ENCODE measurements at regions of chr18 and their contacts with region 1.

Region 1: GRCh38 chr18:51077217-51077616 is 47.2 kb downstream of the SMAD4 start:
- DNase-seq: no peak
- H3K4me3 ChIP-seq: no peak overlapping the region
- H3K27ac ChIP-seq: no peak overlapping the region
- H3K4me1 ChIP-seq: peaks cover 0 to 19% (median 11%) of the 10 kb centered on the region in 4 donors
- H3K27me3 ChIP-seq: no peaks in the 10 kb centered on the region
- CTCF ChIP-seq: no peak
- EP300 ChIP-seq: no peak
- POLR2A ChIP-seq: no peak

Region 2: DNA sequence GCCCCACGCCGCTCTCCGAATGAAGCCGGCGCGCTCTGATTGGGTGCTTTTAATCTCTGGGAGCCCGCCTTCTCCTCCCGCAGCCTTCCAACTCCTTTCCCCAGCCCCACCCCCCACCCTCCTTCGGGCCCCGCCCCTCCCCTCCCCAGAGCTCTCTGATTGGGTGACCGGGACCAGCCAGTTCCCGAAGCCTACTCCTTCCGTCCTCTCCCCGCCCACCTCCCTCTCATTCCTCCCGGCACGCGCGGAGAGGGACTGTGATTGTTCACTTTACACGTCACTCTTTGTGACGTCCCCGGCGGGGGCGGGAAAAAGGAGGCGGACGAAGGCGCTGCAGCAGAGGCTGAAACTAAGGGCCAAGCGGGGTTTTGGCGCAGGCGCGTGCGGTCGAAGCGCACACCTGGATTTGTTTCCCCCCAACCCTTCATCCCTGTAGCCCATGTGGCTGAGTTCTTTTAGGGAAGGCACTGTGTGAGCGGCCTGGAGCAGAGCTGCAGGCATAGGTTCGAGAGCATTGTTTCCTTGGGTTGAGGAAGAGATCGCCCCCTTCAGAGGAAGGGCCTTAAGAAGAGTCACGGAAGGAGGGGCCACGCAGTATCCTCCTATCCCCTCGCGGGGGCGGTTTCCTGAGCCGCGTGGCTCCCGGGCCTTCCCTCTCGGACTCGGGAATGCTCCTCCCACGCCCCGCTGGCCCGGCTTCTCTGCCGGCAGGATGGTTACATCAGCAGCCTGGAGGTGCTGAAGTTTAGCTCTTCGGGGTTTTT is 120.6 kb after region 1 on chr18 and contains the start of gene MEX3C:
- intact Hi-C with region 1: loop called (anchors 10 kb)
- DNase-seq: peak; percentile 100
- H3K4me3 ChIP-seq: peak within 1 kb of the TSS; percentile 69 to 91 (median 78)
- H3K27ac ChIP-seq: peak within 1 kb of the TSS; percentile 97 to 99 (median 98)
- H3K4me1 ChIP-seq: peaks cover 21 to 37% (median 34%) of the 10 kb centered on the region in 4 donors
- H3K27me3 ChIP-seq: no peaks in the 10 kb centered on the region
- CTCF ChIP-seq: peak in 2 of 3 experiments; percentile 22 to 36
- EP300 ChIP-seq: no peak
- POLR2A ChIP-seq: no peak
- total RNA-seq, gene MEX3C: 22.8 to 38.0 (median 30.3) TPM